ENCODE measurements at regions of chr18 and their contacts with region 1.

Region 1: DNA sequence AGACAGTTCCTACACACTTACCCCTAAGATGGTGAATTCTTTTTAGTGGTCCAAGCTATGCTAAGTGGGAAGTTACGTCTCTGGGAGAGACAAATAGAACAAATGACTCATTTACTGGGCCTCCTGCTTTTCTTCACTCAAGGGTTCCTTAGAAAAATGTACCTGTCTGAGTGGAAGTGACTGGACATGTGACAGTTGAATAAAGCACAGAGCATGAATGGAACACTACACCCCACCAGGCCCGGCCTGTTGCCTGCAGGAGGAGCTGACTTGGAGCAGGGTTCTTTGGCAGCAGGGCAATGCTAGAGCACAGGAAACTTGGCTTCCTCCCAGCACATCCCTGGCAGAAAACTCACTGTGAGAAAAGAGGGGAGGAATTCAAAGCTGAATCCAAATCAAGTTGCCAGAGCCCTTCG is 451.0 kb upstream of the SETBP1 start:
- DNase-seq: peak; percentile 62 to 83
- H3K4me3 ChIP-seq: no peak overlapping the region
- H3K27ac ChIP-seq: peak overlapping the region in 1 of 2 donors; percentile 43
- H3K4me1 ChIP-seq: no peaks in the 10 kb centered on the region
- H3K27me3 ChIP-seq: no peaks in the 10 kb centered on the region
- CTCF ChIP-seq: no peak
- POLR2A ChIP-seq: no peak

Region 2: DNA sequence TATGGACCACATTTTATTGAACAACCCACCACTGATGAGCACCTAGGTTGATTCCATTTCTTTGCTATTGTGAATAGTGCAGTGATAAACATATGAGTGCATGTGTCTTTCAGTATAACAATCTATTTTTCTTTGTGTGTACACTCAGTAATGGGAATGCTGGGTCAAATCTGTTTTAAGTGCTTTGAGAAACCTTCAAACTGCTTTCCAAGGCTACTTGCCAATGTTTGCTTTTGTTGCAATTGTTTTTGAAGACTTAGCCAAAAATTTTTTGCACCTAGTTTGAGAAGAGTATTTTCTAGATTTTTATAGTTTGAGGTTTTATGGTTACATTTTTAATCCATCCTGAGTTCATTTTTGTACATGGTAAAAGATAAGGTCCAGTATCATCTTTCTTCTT is 136.4 kb before region 1 on chr18:
- intact Hi-C with region 1: loop called (anchors 5 kb)
- DNase-seq: no peak
- H3K4me3 ChIP-seq: no peak overlapping the region
- H3K27ac ChIP-seq: no peak overlapping the region
- H3K4me1 ChIP-seq: no peaks in the 10 kb centered on the region
- H3K27me3 ChIP-seq: no peaks in the 10 kb centered on the region
- CTCF ChIP-seq: no peak
- POLR2A ChIP-seq: no peak

Region 3: GRCh38 chr18:44214396-44214795 is 15.3 kb before region 1 on chr18:
- intact Hi-C with region 1: no loop called
- DNase-seq: no peak
- H3K4me3 ChIP-seq: no peak overlapping the region
- H3K27ac ChIP-seq: no peak overlapping the region
- H3K4me1 ChIP-seq: no peaks in the 10 kb centered on the region
- H3K27me3 ChIP-seq: no peaks in the 10 kb centered on the region
- CTCF ChIP-seq: no peak
- POLR2A ChIP-seq: no peak

Region 4: DNA sequence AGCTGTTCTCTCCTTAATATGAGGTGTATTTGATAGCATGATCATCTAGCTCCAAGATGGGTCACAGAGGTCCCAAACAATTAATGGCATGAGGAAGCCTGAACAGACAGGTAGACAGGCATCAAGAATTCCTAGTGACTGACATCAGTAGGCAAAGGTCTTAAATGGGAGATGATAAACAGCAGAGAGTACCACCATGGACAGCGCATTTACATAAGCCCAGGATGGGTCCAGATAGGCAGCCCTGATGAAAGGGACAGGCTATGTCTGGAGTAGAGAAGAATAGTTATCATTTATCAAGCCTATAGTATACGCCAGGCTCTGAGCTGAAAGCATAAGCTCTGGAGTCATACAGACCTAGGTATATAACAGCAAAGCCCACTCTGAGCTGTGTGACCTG is 16.3 kb after region 1 on chr18:
- intact Hi-C with region 1: no loop called
- DNase-seq: no peak
- H3K4me3 ChIP-seq: no peak overlapping the region
- H3K27ac ChIP-seq: no peak overlapping the region
- H3K4me1 ChIP-seq: no peaks in the 10 kb centered on the region
- H3K27me3 ChIP-seq: no peaks in the 10 kb centered on the region
- CTCF ChIP-seq: no peak
- POLR2A ChIP-seq: no peak

Measured in breast epithelium (tissue), 4 donors.